ENCODE measurements at regions of chr19 and their contacts with region 1.

Region 1: DNA sequence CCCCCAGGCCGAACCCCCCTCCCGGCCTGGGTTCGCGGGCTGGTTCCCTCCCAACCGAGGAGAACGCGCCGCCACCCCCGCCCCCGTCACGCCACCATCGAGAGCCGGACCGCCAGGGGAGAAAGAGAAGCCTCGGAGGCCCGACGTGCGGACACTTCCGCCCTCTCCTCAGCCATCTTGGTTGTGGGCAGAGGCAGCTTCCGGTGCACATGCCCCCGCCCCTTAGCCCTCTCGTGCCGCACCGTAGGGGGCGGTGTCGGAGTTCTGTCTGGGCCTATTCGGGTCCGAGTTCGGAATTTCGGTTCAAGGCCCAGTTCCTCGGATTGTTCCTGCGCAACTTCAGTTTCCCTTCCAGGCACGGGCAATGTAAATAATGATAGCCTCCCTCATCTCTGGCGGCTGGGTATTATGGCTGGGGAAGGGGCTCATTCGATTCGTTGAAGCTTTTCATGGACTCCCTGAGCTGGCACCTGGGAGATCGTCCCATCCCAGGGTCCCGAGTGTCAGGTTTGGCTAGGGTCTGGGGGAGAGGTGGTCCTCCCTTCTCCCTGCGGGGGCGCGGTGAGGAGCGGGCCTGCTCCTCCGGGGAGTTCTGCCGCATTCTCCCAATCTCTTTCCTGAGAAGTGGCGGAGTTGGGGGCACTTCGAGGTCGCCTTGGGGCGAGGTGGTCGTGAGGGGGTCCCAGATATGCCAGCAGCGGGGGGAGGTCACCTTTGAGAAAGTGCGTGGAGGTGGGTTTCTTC is at the starts of genes IER2 and STX10:
- DNase-seq: peak; percentile 93 to 94
- H3K4me3 ChIP-seq: peak within 1 kb of the TSS; percentile 62
- H3K4me3 Mint-ChIP-seq: peak within 1 kb of the TSS; percentile 83
- H3K27ac Mint-ChIP-seq: peak within 1 kb of the TSS; percentile 98
- H3K4me1 ChIP-seq: peaks cover 5% of the 10 kb centered on the region
- H3K4me1 Mint-ChIP-seq: peaks cover 23% of the 10 kb centered on the region
- H3K27me3 ChIP-seq: no peaks in the 10 kb centered on the region
- H3K27me3 Mint-ChIP-seq: peaks cover 4% of the 10 kb centered on the region
- CTCF ChIP-seq: peak; percentile 27 to 63
- total RNA-seq, gene IER2: 72.0 and 72.4 TPM in 2 replicates
- total RNA-seq, gene STX10: 19.3 and 26.4 TPM in 2 replicates

Region 2: DNA sequence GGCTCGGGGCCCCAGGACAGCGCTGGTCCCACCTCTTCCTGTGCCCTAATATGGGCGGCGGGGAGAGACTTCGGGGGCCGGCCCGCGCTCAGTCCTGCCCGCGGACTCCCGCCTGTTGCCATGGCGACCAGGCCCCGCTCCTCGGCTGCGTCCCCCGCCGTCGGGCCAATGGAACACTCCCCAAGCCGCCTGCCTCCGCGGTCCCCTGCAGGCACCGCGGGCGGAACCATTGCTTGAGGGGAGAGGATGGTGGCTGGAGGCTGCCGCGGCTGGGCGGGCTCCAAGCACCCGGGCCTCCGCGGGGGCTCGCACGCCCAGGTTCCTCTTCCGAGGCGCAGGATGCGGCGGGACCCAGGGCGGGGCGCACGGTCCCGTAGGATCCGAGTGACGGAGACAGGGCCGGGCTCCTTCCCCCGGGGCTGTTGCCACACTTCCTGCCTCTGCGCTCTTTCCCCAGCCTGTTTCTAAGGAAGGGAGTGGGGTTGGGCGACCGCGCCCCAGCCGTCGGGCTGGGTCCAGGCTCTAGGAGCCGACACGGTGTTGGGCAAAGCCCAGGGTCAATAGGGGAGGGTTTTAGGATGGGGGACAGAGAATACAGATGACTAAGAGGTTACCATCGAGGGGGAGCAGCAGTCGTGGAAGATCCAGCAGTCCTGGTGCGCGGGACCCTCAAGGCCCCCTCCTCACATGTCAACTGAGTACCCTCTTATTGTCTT is 360.3 kb before region 1 on chr19:
- CTCF ChIA-PET with region 1: no interaction called
- POLR2A ChIA-PET with region 1: no interaction called
- intact Hi-C with region 1: loop called (anchors 5 kb)
- DNase-seq: peak; percentile 95 to 96
- H3K4me3 ChIP-seq: peak overlapping the region; percentile 40
- H3K4me3 Mint-ChIP-seq: peak overlapping the region; percentile 92
- H3K27ac Mint-ChIP-seq: peak overlapping the region; percentile 83
- H3K4me1 ChIP-seq: peaks cover 25% of the 10 kb centered on the region
- H3K4me1 Mint-ChIP-seq: peaks cover 21% of the 10 kb centered on the region
- H3K27me3 ChIP-seq: no peaks in the 10 kb centered on the region
- H3K27me3 Mint-ChIP-seq: no peaks in the 10 kb centered on the region
- CTCF ChIP-seq: no peak

Region 3: GRCh38 chr19:13117772-13118423 is 32.5 kb before region 1 on chr19 and contains the start of gene NACC1:
- CTCF ChIA-PET with region 1: no interaction called
- POLR2A ChIA-PET with region 1: interaction called, 6 read pairs
- intact Hi-C with region 1: loop called (anchors 2 kb)
- DNase-seq: peak; percentile 87 to 93
- H3K4me3 ChIP-seq: peak within 1 kb of the TSS; percentile 93
- H3K4me3 Mint-ChIP-seq: peak within 1 kb of the TSS; percentile 100
- H3K27ac Mint-ChIP-seq: peak within 1 kb of the TSS; percentile 96
- H3K4me1 ChIP-seq: no peaks in the 10 kb centered on the region
- H3K4me1 Mint-ChIP-seq: peaks cover 6% of the 10 kb centered on the region
- H3K27me3 ChIP-seq: no peaks in the 10 kb centered on the region
- H3K27me3 Mint-ChIP-seq: no peaks in the 10 kb centered on the region
- CTCF ChIP-seq: no peak
- total RNA-seq, gene NACC1: 89.6 and 92.7 TPM in 2 replicates

Region 4: GRCh38 chr19:13162518-13163314 is 12.4 kb after region 1 on chr19:
- CTCF ChIA-PET with region 1: interaction called, 9 read pairs
- POLR2A ChIA-PET with region 1: interaction called, 29 read pairs
- intact Hi-C with region 1: loop called (anchors 1 kb)
- DNase-seq: peak; percentile 99
- H3K4me3 ChIP-seq: peak overlapping the region; percentile 48
- H3K4me3 Mint-ChIP-seq: peak overlapping the region; percentile 79
- H3K27ac Mint-ChIP-seq: peak overlapping the region; percentile 93
- H3K4me1 ChIP-seq: peaks cover 37% of the 10 kb centered on the region
- H3K4me1 Mint-ChIP-seq: peaks cover 14% of the 10 kb centered on the region
- H3K27me3 ChIP-seq: no peaks in the 10 kb centered on the region
- H3K27me3 Mint-ChIP-seq: no peaks in the 10 kb centered on the region
- CTCF ChIP-seq: no peak

Region 5: DNA sequence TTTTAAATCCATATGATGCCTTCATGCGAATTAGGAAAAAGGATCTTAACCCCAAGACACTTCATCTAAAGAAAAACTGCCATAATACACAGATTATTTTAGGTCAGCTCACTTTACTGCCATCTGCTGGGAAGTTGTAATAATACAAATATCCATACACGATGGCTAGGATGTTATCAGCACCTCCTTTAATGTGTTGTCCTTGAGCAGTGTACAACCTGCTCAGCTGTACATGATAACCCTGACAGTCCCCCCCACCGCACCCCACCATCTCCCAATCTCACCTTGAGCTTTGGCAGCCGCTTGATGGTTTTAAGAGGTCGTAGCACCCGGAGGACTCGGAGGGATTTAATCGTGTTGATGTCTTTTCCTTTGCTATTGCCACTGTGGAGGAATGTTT is 112.1 kb after region 1 on chr19:
- CTCF ChIA-PET with region 1: interaction called, 3 read pairs
- POLR2A ChIA-PET with region 1: no interaction called
- intact Hi-C with region 1: loop called (anchors 1 kb)
- DNase-seq: peak in 1 of 2 experiments; percentile 43
- H3K4me3 ChIP-seq: no peak overlapping the region
- H3K4me3 Mint-ChIP-seq: no peak overlapping the region
- H3K27ac Mint-ChIP-seq: no peak overlapping the region
- H3K4me1 ChIP-seq: peaks cover 6% of the 10 kb centered on the region; the same call in 1 of the 2 replicates
- H3K4me1 Mint-ChIP-seq: no peaks in the 10 kb centered on the region
- H3K27me3 ChIP-seq: no peaks in the 10 kb centered on the region; the same call in 1 of the 2 replicates
- H3K27me3 Mint-ChIP-seq: peaks cover 14% of the 10 kb centered on the region
- CTCF ChIP-seq: peak; percentile 39 to 47

Region 6: GRCh38 chr19:13347367-13347766 is 197.0 kb after region 1 on chr19:
- CTCF ChIA-PET with region 1: no interaction called
- POLR2A ChIA-PET with region 1: no interaction called
- intact Hi-C with region 1: no loop called
- DNase-seq: no peak
- H3K4me3 ChIP-seq: no peak overlapping the region
- H3K4me3 Mint-ChIP-seq: no peak overlapping the region
- H3K27ac Mint-ChIP-seq: no peak overlapping the region
- H3K4me1 ChIP-seq: no peaks in the 10 kb centered on the region
- H3K4me1 Mint-ChIP-seq: no peaks in the 10 kb centered on the region
- H3K27me3 ChIP-seq: no peaks in the 10 kb centered on the region
- H3K27me3 Mint-ChIP-seq: peaks cover 3% of the 10 kb centered on the region
- CTCF ChIP-seq: no peak

Measured in Caco-2 (cell line).